MCF 10A (cell line): ENCODE measurements at regions of chr10 and their contacts with region 1.

Region 1: DNA sequence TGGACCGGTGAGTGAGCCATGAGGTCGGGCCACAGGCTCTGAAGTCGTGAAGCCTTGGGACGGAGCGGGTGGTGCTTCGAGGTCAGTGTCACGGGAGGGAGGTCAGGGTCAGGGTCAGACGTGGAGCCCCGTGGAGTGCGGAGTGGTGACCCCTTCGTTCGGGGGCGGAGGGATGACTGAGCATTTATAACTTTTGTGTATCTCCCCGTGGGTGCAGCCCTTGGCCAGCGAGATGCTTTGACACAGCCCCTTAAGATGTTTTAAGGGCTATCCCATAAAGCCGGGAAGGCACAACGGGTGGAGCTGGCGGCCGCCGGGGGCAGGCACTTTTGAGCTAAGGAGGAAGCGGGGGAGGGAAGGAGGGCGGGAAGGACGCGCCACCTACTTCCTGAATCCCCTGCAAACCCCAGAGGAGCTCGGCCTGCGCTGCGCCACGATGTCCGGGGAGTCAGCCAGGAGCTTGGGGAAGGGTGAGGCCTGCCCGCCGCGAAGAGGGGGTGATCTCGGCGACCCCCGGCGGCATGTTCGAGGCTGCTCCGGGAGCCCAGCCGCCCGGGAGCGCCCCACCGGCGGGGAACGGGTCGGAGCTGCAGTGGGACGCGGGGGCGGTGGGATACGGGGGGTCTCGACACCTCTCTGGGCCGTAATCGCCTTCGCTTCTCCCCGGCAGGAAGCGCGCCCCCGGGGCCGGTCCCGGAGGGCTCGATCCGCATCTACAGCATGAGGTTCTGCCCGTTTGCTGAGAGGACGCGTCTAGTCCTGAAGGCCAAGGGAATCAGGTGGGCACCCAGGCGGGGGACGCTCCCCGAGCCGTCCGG is at the start of gene GSTO1:
- DNase-seq: peak; percentile 79
- H3K4me3 Mint-ChIP-seq: peak within 1 kb of the TSS; percentile 80
- H3K27ac Mint-ChIP-seq: peak within 1 kb of the TSS; percentile 85
- H3K4me1 Mint-ChIP-seq: peaks cover 28% of the 10 kb centered on the region
- H3K27me3 Mint-ChIP-seq: no peaks in the 10 kb centered on the region
- CTCF ChIP-seq: no peak
- total RNA-seq, gene GSTO1: 54.6 and 61.8 TPM in 2 replicates

Region 2: DNA sequence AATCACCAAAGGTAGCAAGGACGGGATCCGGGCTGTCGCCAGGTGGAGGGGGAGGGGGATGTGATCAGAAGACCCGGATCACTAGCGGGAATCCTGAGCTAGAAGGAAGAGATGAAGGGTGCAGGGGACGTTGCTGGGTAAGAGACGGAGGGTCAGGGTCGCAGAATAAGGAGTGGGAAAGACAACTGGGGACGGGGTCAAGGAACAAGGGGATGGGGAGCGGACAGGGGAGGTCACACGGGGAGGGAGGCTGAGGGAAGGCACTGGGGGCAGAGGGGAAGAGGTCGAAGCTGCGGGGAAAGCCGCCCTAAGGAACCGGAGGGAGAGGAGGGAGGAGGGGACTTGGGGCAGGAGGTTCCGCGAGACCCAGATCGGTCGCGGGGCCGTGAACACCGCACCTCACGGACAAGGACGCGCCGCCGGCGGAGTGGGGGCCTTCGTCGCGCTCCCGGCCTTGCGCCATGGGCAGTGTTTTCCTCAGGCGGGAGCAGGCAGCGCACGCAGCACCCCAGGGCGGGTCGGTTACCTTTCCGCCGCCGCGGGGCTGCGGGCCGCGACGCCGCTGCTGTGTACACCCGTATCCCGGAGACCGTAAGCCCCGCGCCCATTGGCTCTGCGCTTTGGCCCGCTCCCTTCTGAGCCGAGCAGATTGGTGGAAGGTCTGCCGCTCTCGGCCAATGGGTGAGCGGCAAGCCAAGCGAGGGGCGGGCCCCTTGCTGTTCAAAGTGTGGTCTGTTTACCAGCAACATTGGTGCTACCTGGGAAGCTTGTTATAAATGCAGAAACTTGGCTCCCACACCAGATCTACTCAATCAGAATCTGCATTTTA is 22.7 kb before region 1 on chr10 and contains the start of gene CFAP43:
- CTCF ChIA-PET with region 1: interaction called, 3 read pairs
- POLR2A ChIA-PET with region 1: interaction called, 51 read pairs
- intact Hi-C with region 1: no loop called
- DNase-seq: peak; percentile 97
- H3K4me3 Mint-ChIP-seq: peak within 1 kb of the TSS; percentile 81
- H3K27ac Mint-ChIP-seq: peak within 1 kb of the TSS; percentile 93
- H3K4me1 Mint-ChIP-seq: peaks cover 11% of the 10 kb centered on the region
- H3K27me3 Mint-ChIP-seq: peaks cover 27% of the 10 kb centered on the region
- CTCF ChIP-seq: no peak
- total RNA-seq, gene CFAP43: 0.25 and 0.42 TPM in 2 replicates

Region 3: GRCh38 chr10:104268716-104269645 is 14.3 kb after region 1 on chr10 and contains the start of gene GSTO2:
- CTCF ChIA-PET with region 1: interaction called, 139 read pairs
- POLR2A ChIA-PET with region 1: interaction called, 56 read pairs
- intact Hi-C with region 1: no loop called
- DNase-seq: peak; percentile 97
- H3K4me3 Mint-ChIP-seq: peak within 1 kb of the TSS; percentile 85
- H3K27ac Mint-ChIP-seq: peak within 1 kb of the TSS; percentile 92
- H3K4me1 Mint-ChIP-seq: peaks cover 8% of the 10 kb centered on the region
- H3K27me3 Mint-ChIP-seq: no peaks in the 10 kb centered on the region
- CTCF ChIP-seq: no peak
- total RNA-seq, gene GSTO2: 33.8 and 40.9 TPM in 2 replicates

Region 4: DNA sequence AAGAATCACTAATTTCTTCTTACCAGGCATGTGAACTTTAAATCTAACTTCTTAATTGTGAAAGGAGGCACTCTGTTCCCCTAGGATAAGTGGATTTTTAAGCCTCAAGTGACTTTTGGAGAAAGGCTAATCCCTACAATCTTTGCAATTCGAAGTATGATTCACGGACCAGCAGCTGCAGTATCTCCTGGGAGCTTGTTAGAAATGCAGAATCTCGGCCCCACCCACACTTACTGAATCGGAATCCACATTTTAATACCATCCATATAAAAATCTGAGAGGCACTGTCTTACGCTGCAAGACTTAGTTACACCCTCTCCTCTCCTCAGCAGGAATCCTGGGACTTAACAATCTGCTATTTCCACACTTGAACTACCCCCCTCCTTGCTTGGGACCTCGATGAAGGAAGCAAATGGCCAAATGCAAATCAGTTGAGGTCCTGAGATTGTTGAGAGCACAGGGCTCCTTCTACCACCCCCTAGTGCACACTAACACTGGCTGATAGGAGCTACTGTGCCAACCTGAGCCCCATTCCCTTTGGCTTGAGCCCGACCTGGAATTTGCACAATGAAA is 62.6 kb after region 1 on chr10:
- CTCF ChIA-PET with region 1: no interaction called
- POLR2A ChIA-PET with region 1: interaction called, 12 read pairs
- intact Hi-C with region 1: no loop called
- DNase-seq: no peak
- H3K4me3 Mint-ChIP-seq: peak overlapping the region; percentile 19
- H3K27ac Mint-ChIP-seq: peak overlapping the region; percentile 93
- H3K4me1 Mint-ChIP-seq: peaks cover 47% of the 10 kb centered on the region
- H3K27me3 Mint-ChIP-seq: no peaks in the 10 kb centered on the region
- CTCF ChIP-seq: no peak

Region 5: DNA sequence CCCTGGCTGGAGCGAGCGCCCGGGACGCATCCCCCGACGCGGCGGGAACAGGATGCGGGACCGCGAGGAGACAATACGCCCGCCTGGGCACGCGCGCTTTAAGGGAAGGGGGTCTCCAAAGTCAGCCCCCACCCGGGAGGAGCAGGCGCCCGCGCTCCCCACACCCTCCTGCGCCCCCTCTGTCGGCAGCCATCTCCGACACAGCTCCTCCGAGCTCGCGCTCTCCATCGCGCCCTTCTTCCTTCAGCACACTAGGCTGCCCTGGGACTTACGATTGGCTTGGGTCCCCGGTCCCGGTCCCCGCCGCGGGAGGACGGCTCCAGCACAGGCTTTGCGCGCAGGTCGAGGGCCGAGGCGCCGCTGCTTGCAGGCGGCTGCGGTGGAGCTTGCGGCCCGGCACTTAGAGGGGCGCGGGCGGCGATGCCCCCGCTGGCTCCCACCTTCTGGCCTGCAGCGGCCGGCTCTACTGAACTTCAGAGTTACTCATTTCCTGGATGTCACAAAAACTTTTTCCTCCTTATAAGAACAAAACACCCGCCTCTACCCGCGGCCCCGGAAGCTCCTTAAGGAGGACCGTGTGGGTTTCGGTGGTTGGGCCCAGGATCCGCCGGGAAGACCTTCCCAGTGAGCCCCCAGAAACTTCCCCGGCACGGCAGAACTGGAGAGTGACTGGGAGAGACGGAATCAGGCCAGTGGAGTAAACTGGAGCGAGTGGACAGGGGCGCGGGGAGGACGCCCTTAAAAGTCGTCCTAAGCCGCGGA is 83.5 kb after region 1 on chr10 and contains the start of gene ITPRIP:
- CTCF ChIA-PET with region 1: no interaction called
- POLR2A ChIA-PET with region 1: interaction called, 13 read pairs
- intact Hi-C with region 1: no loop called
- DNase-seq: peak; percentile 81
- H3K4me3 Mint-ChIP-seq: peak within 1 kb of the TSS; percentile 80
- H3K27ac Mint-ChIP-seq: peak within 1 kb of the TSS; percentile 97
- H3K4me1 Mint-ChIP-seq: peaks cover 39% of the 10 kb centered on the region
- H3K27me3 Mint-ChIP-seq: no peaks in the 10 kb centered on the region
- CTCF ChIP-seq: no peak
- total RNA-seq, gene ITPRIP: 29.4 and 29.8 TPM in 2 replicates

Region 6: GRCh38 chr10:104657457-104657856 is 402.8 kb after region 1 on chr10:
- CTCF ChIA-PET with region 1: no interaction called
- POLR2A ChIA-PET with region 1: no interaction called
- intact Hi-C with region 1: no loop called
- DNase-seq: no peak
- H3K4me3 Mint-ChIP-seq: no peak overlapping the region
- H3K27ac Mint-ChIP-seq: no peak overlapping the region
- H3K4me1 Mint-ChIP-seq: no peaks in the 10 kb centered on the region
- H3K27me3 Mint-ChIP-seq: no peaks in the 10 kb centered on the region
- CTCF ChIP-seq: no peak